ENCODE measurements at regions of chr13 and their contacts with region 1.

Region 1: GRCh38 chr13:46595136-46595886 is 42.3 kb downstream of the LRCH1 start:
- DNase-seq: peak; percentile 94
- H3K4me3 ChIP-seq: peak overlapping the region; percentile 58
- H3K27ac ChIP-seq: peak overlapping the region; percentile 98
- H3K4me1 ChIP-seq: peaks cover 99% of the 10 kb centered on the region
- CTCF ChIP-seq: no peak; the same call in 1 of the 2 replicates

Region 2: GRCh38 chr13:45700971-45701900 is 894.1 kb before region 1 on chr13:
- CTCF ChIA-PET with region 1: no interaction called
- POLR2A ChIA-PET with region 1: no interaction called
- intact Hi-C with region 1: no loop called
- DNase-seq: no peak
- H3K4me3 ChIP-seq: no peak overlapping the region
- H3K27ac ChIP-seq: no peak overlapping the region
- H3K4me1 ChIP-seq: no peaks in the 10 kb centered on the region
- CTCF ChIP-seq: 0 out of 2 replicates have a peak, but pooled peaks have one; percentile 24

Region 3: DNA sequence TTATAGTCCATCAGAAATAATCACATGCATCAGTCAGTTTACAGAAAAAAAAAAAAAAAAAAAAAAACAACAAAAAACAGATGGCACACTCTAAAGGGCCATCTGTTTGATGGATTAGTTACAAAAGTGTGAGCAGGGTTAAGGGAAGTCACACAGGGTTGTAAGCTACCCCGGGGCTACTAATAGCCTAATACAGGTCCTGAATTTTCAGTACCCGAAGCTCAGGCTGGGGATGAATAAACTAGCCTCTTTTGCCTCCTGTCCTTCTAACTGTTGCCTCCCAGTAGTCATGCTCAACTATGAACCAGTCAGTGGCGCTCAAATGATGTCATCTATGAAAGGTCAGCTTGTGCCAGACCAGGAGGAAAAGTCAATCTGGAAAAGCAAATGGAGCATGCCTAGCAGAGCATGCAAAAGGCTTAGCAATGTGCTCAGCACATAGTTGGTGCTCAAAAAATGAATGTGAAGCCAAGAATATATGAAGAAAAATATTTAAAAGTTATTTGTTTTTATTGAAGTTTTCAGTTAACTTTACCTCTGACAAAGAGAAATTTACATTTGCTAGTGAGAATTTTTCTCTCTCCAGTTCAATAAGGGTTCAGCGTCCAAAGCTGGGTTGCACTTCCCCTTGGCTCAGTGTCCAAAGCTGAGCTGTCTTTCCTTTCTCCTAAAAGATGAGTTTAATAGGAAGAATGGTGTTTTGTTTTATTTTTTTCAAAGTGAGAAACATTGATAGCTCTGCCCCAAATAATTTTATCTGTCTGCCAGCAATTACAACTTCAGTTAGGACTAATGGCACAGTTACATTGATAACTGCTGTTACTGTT is 73.2 kb before region 1 on chr13:
- CTCF ChIA-PET with region 1: no interaction called
- POLR2A ChIA-PET with region 1: no interaction called
- intact Hi-C with region 1: no loop called
- DNase-seq: no peak
- H3K4me3 ChIP-seq: no peak overlapping the region
- H3K27ac ChIP-seq: no peak overlapping the region
- H3K4me1 ChIP-seq: no peaks in the 10 kb centered on the region
- CTCF ChIP-seq: no peak

Region 4: GRCh38 chr13:46535002-46535401 is 60.3 kb before region 1 on chr13:
- CTCF ChIA-PET with region 1: no interaction called
- POLR2A ChIA-PET with region 1: no interaction called
- intact Hi-C with region 1: no loop called
- DNase-seq: no peak
- H3K4me3 ChIP-seq: no peak overlapping the region
- H3K27ac ChIP-seq: no peak overlapping the region
- H3K4me1 ChIP-seq: no peaks in the 10 kb centered on the region
- CTCF ChIP-seq: no peak

Region 5: GRCh38 chr13:46668302-46668720 is 73.0 kb after region 1 on chr13:
- CTCF ChIA-PET with region 1: no interaction called
- POLR2A ChIA-PET with region 1: interaction called, 5 read pairs
- intact Hi-C with region 1: loop called (anchors 5 kb)
- DNase-seq: peak; percentile 18
- H3K4me3 ChIP-seq: peak overlapping the region; percentile 58
- H3K27ac ChIP-seq: peak overlapping the region; percentile 67
- H3K4me1 ChIP-seq: peaks cover 58% of the 10 kb centered on the region
- CTCF ChIP-seq: no peak